ENCODE measurements at regions of chrX and their contacts with region 1.

Region 1: GRCh38 chrX:65581661-65582339 is 47.2 kb upstream of the LAS1L start:
- DNase-seq: no peak
- ATAC-seq: peak; percentile 94
- H3K4me3 ChIP-seq: no peak overlapping the region
- H3K27ac ChIP-seq: no peak overlapping the region
- H3K4me1 ChIP-seq: no peaks in the 10 kb centered on the region; the same call in 1 of the 2 replicates
- H3K27me3 ChIP-seq: no peaks in the 10 kb centered on the region; the same call in 1 of the 2 replicates
- CTCF ChIP-seq: peak; percentile 76

Region 2: GRCh38 chrX:65871661-65872311 is 290.0 kb after region 1 on chrX:
- CTCF ChIA-PET with region 1: no interaction called
- POLR2A ChIA-PET with region 1: no interaction called
- in situ Hi-C with region 1: no loop called
- intact Hi-C with region 1: no loop called
- DNase-seq: no peak
- ATAC-seq: no peak
- H3K4me3 ChIP-seq: no peak overlapping the region
- H3K27ac ChIP-seq: no peak overlapping the region
- H3K4me1 ChIP-seq: no peaks in the 10 kb centered on the region
- H3K27me3 ChIP-seq: no peaks in the 10 kb centered on the region
- CTCF ChIP-seq: peak; percentile 12; the same call in 1 of the 2 replicates

Region 3: DNA sequence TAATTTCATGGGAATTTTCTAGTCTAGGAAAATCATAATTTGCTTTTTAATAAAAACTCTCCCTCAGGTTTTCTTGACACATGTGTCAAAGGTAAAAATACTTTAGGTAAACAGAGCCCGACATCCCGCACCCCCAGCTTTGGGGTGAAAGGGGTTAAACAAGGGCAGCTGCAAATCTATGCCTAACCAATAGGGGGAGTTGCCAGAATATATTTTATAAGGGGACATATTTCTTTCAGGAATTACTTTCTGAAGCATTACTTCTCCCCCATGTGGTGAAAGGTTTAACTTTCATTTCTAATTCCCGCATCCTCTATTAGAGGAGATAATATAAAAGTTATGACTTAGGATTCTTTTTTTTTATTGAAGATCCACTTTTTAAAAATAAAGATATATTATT is 528.3 kb after region 1 on chrX:
- CTCF ChIA-PET with region 1: no interaction called
- POLR2A ChIA-PET with region 1: no interaction called
- in situ Hi-C with region 1: no loop called
- intact Hi-C with region 1: loop called (anchors 10 kb)
- DNase-seq: no peak
- ATAC-seq: no peak
- H3K4me3 ChIP-seq: no peak overlapping the region
- H3K27ac ChIP-seq: no peak overlapping the region
- H3K4me1 ChIP-seq: no peaks in the 10 kb centered on the region
- H3K27me3 ChIP-seq: no peaks in the 10 kb centered on the region
- CTCF ChIP-seq: peak; percentile 61; the same call in 1 of the 2 replicates

Region 4: DNA sequence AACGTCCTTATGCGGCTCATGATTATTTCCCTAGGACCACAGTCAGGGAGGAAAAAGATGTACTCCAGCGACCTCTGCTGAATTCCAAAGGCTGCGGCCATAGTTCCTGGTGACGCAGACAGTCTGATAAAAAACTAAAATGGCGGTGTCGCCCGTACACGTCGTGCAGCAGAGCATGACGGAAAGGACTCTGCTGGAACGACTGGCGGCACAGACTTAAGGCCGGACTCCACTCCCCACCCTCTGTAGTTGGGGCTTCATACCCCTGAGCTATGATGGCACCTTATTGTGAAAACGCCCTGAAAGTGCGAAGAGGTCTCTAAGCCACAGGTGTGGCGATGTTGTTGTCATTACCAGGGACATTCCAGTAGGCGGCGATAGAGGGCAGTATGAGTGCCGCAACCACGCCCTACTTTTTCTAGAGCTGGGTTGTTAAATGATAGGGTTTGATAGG is 1147.0 kb after region 1 on chrX:
- CTCF ChIA-PET with region 1: no interaction called
- POLR2A ChIA-PET with region 1: no interaction called
- in situ Hi-C with region 1: no loop called
- intact Hi-C with region 1: loop called (anchors 5 kb)
- DNase-seq: no peak
- ATAC-seq: no peak
- H3K4me3 ChIP-seq: no peak overlapping the region
- H3K27ac ChIP-seq: no peak overlapping the region
- H3K4me1 ChIP-seq: no peaks in the 10 kb centered on the region
- H3K27me3 ChIP-seq: no peaks in the 10 kb centered on the region
- CTCF ChIP-seq: peak; percentile 67